Heart left ventricle (tissue), 16 donors: ENCODE measurements at regions of chr2 and their contacts with region 1.

Region 1: GRCh38 chr2:10844097-10844496 is 31.5 kb upstream of the PDIA6 start:
- DNase-seq: peak; percentile 83 to 95 (median 86)
- ATAC-seq: peak; percentile 84 to 91 (median 86)
- H3K4me3 ChIP-seq: peak overlapping the region in 11 of 12 donors; percentile 27 to 59 (median 51)
- H3K27ac ChIP-seq: peak overlapping the region; percentile 61 to 97 (median 89)
- H3K4me1 ChIP-seq: peaks cover 0 to 17% (median 0%) of the 10 kb centered on the region in 12 donors
- H3K27me3 ChIP-seq: no peaks in the 10 kb centered on the region
- CTCF ChIP-seq: no peak
- POLR2A ChIP-seq: peak in 1 of 2 donors; percentile 76

Region 2: GRCh38 chr2:10868465-10869314 is 24.6 kb after region 1 on chr2:
- intact Hi-C with region 1: loop called in 2 of 10 experiments (anchors 2 kb)
- DNase-seq: peak in 4 of 5 donors; percentile 60 to 79 (median 68)
- ATAC-seq: peak; percentile 68 to 85 (median 75)
- H3K4me3 ChIP-seq: peak overlapping the region in 1 of 12 donors; percentile 25
- H3K27ac ChIP-seq: peak overlapping the region; percentile 52 to 96 (median 82)
- H3K4me1 ChIP-seq: peaks cover 0 to 79% (median 23%) of the 10 kb centered on the region in 12 donors
- H3K27me3 ChIP-seq: peaks cover 0 to 4% (median 0%) of the 10 kb centered on the region in 9 donors
- CTCF ChIP-seq: no peak
- POLR2A ChIP-seq: no peak

Region 3: GRCh38 chr2:10873790-10874437 is 29.8 kb after region 1 on chr2:
- intact Hi-C with region 1: loop called in 4 of 10 experiments (anchors 2 to 5 kb)
- DNase-seq: peak; percentile 63 to 80 (median 71)
- ATAC-seq: peak; percentile 92 to 94 (median 92)
- H3K4me3 ChIP-seq: no peak overlapping the region
- H3K27ac ChIP-seq: peak overlapping the region in 11 of 12 donors; percentile 47 to 87 (median 72)
- H3K4me1 ChIP-seq: peaks cover 0 to 62% (median 19%) of the 10 kb centered on the region in 12 donors
- H3K27me3 ChIP-seq: no peaks in the 10 kb centered on the region
- CTCF ChIP-seq: no peak
- POLR2A ChIP-seq: no peak